H1 (cell line): ENCODE measurements at regions of chr6 and their contacts with region 1.

Region 1: GRCh38 chr6:2634139-2634964 is 116.4 kb downstream of the MYLK4 start:
- DNase-seq: peak; percentile 70 to 97
- H3K4me3 ChIP-seq: peak overlapping the region; percentile 2 to 60 (median 22); a peak in 7 of 8 replicates
- H3K27ac ChIP-seq: no peak overlapping the region
- H3K4me1 ChIP-seq: peaks cover 0 to 8% (median 2%) of the 10 kb centered on the region in 4 experiments; a peak in 2 of 7 replicates
- H3K27me3 ChIP-seq: peaks cover 0 to 11% (median 10%) of the 10 kb centered on the region in 4 experiments; a peak in 4 of 7 replicates
- CTCF ChIP-seq: peak; percentile 89 to 96 (median 92)
- EP300 ChIP-seq: no peak; a peak in 1 of 3 replicates
- POLR2A ChIP-seq: no peak
- RAD21 ChIP-seq: peak; percentile 85 to 91

Region 2: GRCh38 chr6:2596222-2596621 is 38.1 kb before region 1 on chr6:
- CTCF ChIA-PET with region 1: interaction called, 12 read pairs
- POLR2A ChIA-PET with region 1: no interaction called
- DNase-seq: peak; percentile 44 to 71
- H3K4me3 ChIP-seq: no peak overlapping the region
- H3K27ac ChIP-seq: no peak overlapping the region
- H3K4me1 ChIP-seq: 0 out of 7 replicates have a peak, but pooled peaks cover 0 to 2% (median 0%) of the 10 kb centered on the region in 4 experiments
- H3K27me3 ChIP-seq: no peaks in the 10 kb centered on the region
- CTCF ChIP-seq: peak; percentile 89 to 91 (median 89)
- EP300 ChIP-seq: no peak
- POLR2A ChIP-seq: no peak
- RAD21 ChIP-seq: peak; percentile 83 to 93

Region 3: DNA sequence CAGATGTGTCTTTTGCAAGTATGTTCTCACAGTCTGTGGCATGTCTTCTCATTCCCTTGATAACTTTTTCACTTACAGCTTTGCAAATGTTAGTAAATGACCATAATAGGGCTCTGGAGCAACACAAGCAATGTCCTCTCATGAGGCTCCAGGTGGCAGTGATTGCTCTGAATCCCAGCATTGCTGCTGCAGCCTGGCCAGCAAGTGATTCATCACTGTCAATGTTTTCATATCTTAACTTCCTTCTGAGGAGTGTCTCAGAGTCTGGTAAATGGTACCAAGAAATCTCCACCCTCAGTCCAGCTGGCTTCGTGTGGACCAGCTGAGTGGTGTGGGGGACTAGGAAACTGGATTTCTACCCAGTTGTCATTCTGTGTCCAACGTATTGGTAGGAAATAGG is 23.3 kb before region 1 on chr6:
- CTCF ChIA-PET with region 1: interaction called, 23 read pairs
- POLR2A ChIA-PET with region 1: no interaction called
- DNase-seq: no peak
- H3K4me3 ChIP-seq: no peak overlapping the region
- H3K27ac ChIP-seq: no peak overlapping the region
- H3K4me1 ChIP-seq: no peaks in the 10 kb centered on the region
- H3K27me3 ChIP-seq: no peaks in the 10 kb centered on the region
- CTCF ChIP-seq: no peak
- EP300 ChIP-seq: no peak
- POLR2A ChIP-seq: no peak
- RAD21 ChIP-seq: no peak

Region 4: GRCh38 chr6:2622671-2623070 is 11.7 kb before region 1 on chr6:
- CTCF ChIA-PET with region 1: interaction called, 31 read pairs
- POLR2A ChIA-PET with region 1: no interaction called
- DNase-seq: no peak
- H3K4me3 ChIP-seq: no peak overlapping the region
- H3K27ac ChIP-seq: no peak overlapping the region
- H3K4me1 ChIP-seq: no peaks in the 10 kb centered on the region
- H3K27me3 ChIP-seq: no peaks in the 10 kb centered on the region
- CTCF ChIP-seq: peak in 1 of 3 experiments; percentile 3; a peak in 1 of 4 replicates
- EP300 ChIP-seq: no peak
- POLR2A ChIP-seq: no peak
- RAD21 ChIP-seq: no peak

Region 5: DNA sequence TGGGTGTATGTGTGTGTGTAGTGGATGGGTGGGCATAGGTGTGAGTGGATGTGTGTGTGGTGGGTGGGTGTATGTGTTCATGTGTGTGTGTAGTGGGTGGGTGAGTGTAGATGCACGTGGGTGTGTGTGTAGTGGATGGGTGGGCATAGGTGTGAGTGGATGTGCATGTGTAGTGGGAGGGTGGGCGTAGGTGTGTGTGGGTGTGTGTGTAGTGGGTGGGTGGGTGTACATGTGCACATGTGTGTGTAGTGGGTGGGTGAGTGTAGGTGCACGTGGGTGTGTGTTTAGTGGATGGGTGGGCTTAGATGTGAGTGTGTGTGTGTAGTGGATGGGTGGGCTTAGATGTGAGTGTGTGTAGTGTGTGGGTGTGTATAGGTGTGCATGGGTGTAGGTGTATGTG is 12.0 kb after region 1 on chr6:
- CTCF ChIA-PET with region 1: interaction called, 13 read pairs
- POLR2A ChIA-PET with region 1: interaction called, 3 read pairs
- DNase-seq: no peak
- H3K4me3 ChIP-seq: no peak overlapping the region
- H3K27ac ChIP-seq: no peak overlapping the region
- H3K4me1 ChIP-seq: peaks cover 0 to 4% (median 1%) of the 10 kb centered on the region in 4 experiments; a peak in 6 of 7 replicates
- H3K27me3 ChIP-seq: no peaks in the 10 kb centered on the region
- CTCF ChIP-seq: no peak
- EP300 ChIP-seq: no peak
- POLR2A ChIP-seq: no peak
- RAD21 ChIP-seq: no peak

Region 6: DNA sequence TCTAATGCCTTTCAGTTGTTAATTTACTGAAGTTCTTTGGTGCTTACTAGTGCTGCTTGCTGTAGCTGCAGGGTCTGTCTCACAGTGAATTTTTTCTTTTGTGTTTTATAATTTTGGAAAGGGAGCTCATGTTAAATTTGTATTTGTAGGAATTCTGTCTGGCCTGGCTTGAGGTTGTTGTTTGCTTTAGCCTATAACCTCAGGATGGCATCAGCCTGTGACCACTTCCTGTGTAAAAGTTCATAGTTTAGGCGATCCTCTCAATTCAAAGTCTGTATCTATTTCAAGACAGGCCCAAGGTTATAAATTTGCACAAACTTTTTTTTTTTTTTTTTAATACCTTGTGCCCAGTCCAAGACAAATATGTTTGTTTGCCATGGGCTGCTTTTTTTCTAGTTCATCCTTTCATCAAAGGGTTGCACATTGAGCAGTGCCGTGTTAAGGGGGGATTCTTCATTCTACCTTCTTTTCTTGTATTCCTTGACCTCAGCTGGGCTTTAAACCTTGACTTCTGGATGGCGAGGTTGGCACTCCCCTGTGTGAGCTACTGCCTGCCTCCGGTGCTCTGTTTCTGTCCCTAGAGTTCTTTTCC is 441.3 kb after region 1 on chr6:
- CTCF ChIA-PET with region 1: no interaction called
- POLR2A ChIA-PET with region 1: no interaction called
- DNase-seq: no peak
- H3K4me3 ChIP-seq: peak overlapping the region in 1 of 4 experiments; percentile 33; a peak in 1 of 8 replicates
- H3K27ac ChIP-seq: peak overlapping the region; percentile 78; the same call in 1 of the 2 replicates
- H3K4me1 ChIP-seq: peaks cover 5 to 28% (median 13%) of the 10 kb centered on the region in 4 experiments; a peak in 6 of 7 replicates
- H3K27me3 ChIP-seq: no peaks in the 10 kb centered on the region
- CTCF ChIP-seq: no peak
- EP300 ChIP-seq: no peak
- POLR2A ChIP-seq: no peak
- RAD21 ChIP-seq: no peak